B cell (primary cell): ENCODE measurements at regions of chr1 and their contacts with region 1.

Region 1: GRCh38 chr1:3668585-3669300 is 16.4 kb downstream of the TP73 start:
- DNase-seq: no peak
- ATAC-seq: no peak
- H3K4me3 ChIP-seq: no peak overlapping the region
- H3K4me3 Mint-ChIP-seq: no peak overlapping the region
- H3K27ac ChIP-seq: no peak overlapping the region
- H3K27ac Mint-ChIP-seq: peak overlapping the region; percentile 18
- H3K4me1 ChIP-seq: peaks cover 59 to 68% of the 10 kb centered on the region in 2 donors
- H3K4me1 Mint-ChIP-seq: peaks cover 64% of the 10 kb centered on the region
- H3K27me3 ChIP-seq: peaks cover 0 to 10% (median 0%) of the 10 kb centered on the region in 4 experiments
- H3K27me3 Mint-ChIP-seq: no peaks in the 10 kb centered on the region
- CTCF ChIP-seq: no peak

Region 2: DNA sequence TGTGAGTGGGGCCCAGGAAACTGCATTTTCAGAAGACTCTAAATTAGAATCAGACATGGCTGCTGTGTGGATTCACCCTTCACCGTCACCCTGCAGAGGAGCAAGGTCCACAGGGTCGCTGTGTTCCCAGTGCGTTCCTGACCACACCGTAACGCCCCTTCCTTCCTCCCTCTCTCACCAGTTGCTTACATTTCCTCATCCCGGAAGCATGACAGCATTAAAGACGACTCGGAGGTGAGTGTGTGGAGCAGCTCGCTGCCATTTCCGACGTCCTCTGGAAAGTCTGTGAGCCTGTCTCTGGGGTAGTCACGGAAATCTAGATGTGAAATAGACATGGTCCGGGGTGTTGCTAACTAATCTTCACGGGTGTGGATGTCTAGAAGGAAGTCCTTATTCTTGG is 1520.1 kb before region 1 on chr1:
- CTCF ChIA-PET with region 1: no interaction called
- POLR2A ChIA-PET with region 1: no interaction called
- intact Hi-C with region 1: no loop called
- DNase-seq: no peak
- ATAC-seq: peak; percentile 33
- H3K4me3 ChIP-seq: no peak overlapping the region
- H3K4me3 Mint-ChIP-seq: no peak overlapping the region
- H3K27ac ChIP-seq: no peak overlapping the region
- H3K27ac Mint-ChIP-seq: no peak overlapping the region
- H3K4me1 ChIP-seq: peaks cover 8 to 11% of the 10 kb centered on the region in 2 donors
- H3K4me1 Mint-ChIP-seq: no peaks in the 10 kb centered on the region
- H3K27me3 ChIP-seq: no peaks in the 10 kb centered on the region
- H3K27me3 Mint-ChIP-seq: no peaks in the 10 kb centered on the region
- CTCF ChIP-seq: no peak

Region 3: GRCh38 chr1:3319874-3320245 is 348.9 kb before region 1 on chr1:
- CTCF ChIA-PET with region 1: no interaction called
- POLR2A ChIA-PET with region 1: no interaction called
- intact Hi-C with region 1: no loop called
- DNase-seq: peak; percentile 35
- ATAC-seq: no peak
- H3K4me3 ChIP-seq: no peak overlapping the region
- H3K4me3 Mint-ChIP-seq: no peak overlapping the region
- H3K27ac ChIP-seq: no peak overlapping the region
- H3K27ac Mint-ChIP-seq: no peak overlapping the region
- H3K4me1 ChIP-seq: no peaks in the 10 kb centered on the region
- H3K4me1 Mint-ChIP-seq: peaks cover 6% of the 10 kb centered on the region
- H3K27me3 ChIP-seq: peaks cover 0 to 5% (median 0%) of the 10 kb centered on the region in 4 experiments
- H3K27me3 Mint-ChIP-seq: no peaks in the 10 kb centered on the region
- CTCF ChIP-seq: peak; percentile 20

Region 4: DNA sequence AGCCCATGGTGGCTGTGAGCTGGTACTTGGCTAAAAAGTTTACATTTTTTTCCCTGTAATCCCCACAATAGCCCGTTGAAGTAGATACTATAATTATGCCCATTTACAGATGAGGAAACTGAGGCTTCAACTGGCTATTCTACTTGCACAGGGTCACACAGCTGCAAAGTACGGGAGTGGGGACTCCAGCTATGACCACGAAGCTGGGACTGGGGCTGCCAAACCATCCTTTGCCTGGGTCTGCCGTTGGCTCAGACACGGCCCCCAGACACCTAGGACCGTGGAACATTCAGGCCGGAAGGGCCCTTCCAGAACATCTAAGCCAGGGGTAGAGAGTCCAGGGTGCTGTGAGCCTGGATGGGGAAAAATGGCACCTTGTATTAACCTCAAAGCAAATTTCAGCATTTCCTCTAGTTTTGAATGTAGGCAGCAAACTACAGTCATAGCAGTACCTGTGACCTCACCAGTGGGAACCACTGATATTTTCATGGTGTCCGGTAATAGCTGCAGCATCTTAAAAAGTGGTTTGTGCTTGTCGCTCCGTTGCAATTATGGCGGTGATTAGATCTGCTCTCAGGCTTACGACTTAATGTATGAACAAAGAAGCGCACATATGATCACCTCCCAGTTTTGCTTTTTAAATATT is 12.2 kb before region 1 on chr1:
- CTCF ChIA-PET with region 1: interaction called, 16 read pairs
- POLR2A ChIA-PET with region 1: interaction called, 12 read pairs
- intact Hi-C with region 1: loop called (anchors 1 kb)
- DNase-seq: peak; percentile 23
- ATAC-seq: no peak
- H3K4me3 ChIP-seq: peak overlapping the region in 2 of 5 experiments; percentile 27 to 28
- H3K4me3 Mint-ChIP-seq: peak overlapping the region; percentile 73
- H3K27ac ChIP-seq: no peak overlapping the region
- H3K27ac Mint-ChIP-seq: peak overlapping the region; percentile 29
- H3K4me1 ChIP-seq: peaks cover 28 to 29% of the 10 kb centered on the region in 2 donors
- H3K4me1 Mint-ChIP-seq: peaks cover 21% of the 10 kb centered on the region
- H3K27me3 ChIP-seq: peaks cover 0 to 36% (median 21%) of the 10 kb centered on the region in 4 experiments
- H3K27me3 Mint-ChIP-seq: peaks cover 56% of the 10 kb centered on the region
- CTCF ChIP-seq: no peak